AG04450 (cell line): ENCODE measurements at regions of chr11 and their contacts with region 1.

Region 1: DNA sequence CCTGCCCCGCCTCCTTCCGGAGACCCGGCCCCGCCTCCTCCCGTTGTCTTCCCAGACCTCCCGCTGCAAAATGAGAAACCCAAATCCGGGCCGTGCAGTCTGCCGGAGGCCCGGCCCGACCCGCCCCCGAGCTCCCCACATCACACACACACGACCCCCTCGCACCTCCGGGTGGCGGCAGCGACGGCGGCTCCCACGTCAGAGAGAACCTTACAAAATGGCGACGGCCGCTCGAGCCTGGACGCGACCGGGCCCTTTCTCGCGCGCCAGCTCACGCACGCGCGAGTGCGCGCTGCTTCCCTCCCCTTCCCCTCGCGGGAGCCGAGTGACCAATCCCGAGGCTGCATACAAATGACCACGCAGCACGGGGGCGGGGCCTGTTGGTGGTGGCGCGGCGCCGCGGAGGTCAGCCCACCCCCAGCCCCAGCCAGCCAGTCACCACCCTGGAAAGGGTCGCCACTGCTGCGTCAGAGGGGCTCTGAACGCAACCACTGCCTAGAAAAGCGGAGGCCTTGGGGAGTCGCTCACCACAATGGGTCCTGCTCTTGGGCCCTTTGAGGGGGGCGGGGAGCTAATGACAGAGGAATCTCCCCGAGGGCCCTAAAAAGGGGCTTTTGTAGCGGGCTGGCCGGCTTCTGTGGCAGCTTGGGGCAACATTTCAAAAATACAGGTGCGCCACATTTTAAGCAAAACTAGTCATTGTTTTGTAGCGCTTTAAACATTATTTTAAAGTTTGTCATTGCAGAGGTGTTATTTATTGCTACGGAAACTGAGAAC is at the start of gene RBM4B:
- DNase-seq: peak; percentile 88
- H3K4me3 ChIP-seq: peak within 1 kb of the TSS; percentile 76
- H3K27ac ChIP-seq: peak within 1 kb of the TSS; percentile 96
- H3K27me3 ChIP-seq: no peaks in the 10 kb centered on the region
- CTCF ChIP-seq: no peak
- polyA plus RNA-seq, gene RBM4B: 37.4 and 43.8 TPM in 2 replicates

Region 2: GRCh38 chr11:66545701-66546367 is 132.0 kb before region 1 on chr11 and contains the start of gene ZDHHC24:
- CTCF ChIA-PET with region 1: interaction called, 10 read pairs
- POLR2A ChIA-PET with region 1: interaction called, 17 read pairs
- DNase-seq: peak; percentile 94
- H3K4me3 ChIP-seq: peak within 1 kb of the TSS; percentile 70
- H3K27ac ChIP-seq: no peak within 1 kb of the TSS
- H3K27me3 ChIP-seq: peaks cover 10% of the 10 kb centered on the region
- CTCF ChIP-seq: no peak
- polyA plus RNA-seq, gene ZDHHC24: 6.2 and 6.8 TPM in 2 replicates

Region 3: GRCh38 chr11:66579017-66579606 is 98.7 kb before region 1 on chr11:
- CTCF ChIA-PET with region 1: interaction called, 29 read pairs
- POLR2A ChIA-PET with region 1: interaction called, 3 read pairs
- DNase-seq: peak; percentile 48
- H3K4me3 ChIP-seq: no peak overlapping the region; the same call in 1 of the 2 replicates
- H3K27ac ChIP-seq: no peak overlapping the region
- H3K27me3 ChIP-seq: no peaks in the 10 kb centered on the region
- CTCF ChIP-seq: peak; percentile 84

Region 4: GRCh38 chr11:66638177-66639065 is 39.4 kb before region 1 on chr11 and contains the start of gene RBM4:
- CTCF ChIA-PET with region 1: interaction called, 3 read pairs
- POLR2A ChIA-PET with region 1: interaction called, 20 read pairs
- DNase-seq: peak; percentile 100
- H3K4me3 ChIP-seq: peak within 1 kb of the TSS; percentile 98
- H3K27ac ChIP-seq: peak within 1 kb of the TSS; percentile 88
- H3K27me3 ChIP-seq: no peaks in the 10 kb centered on the region
- CTCF ChIP-seq: 0 out of 2 replicates have a peak, but pooled peaks have one; percentile 21
- polyA plus RNA-seq, gene RBM4: 234 and 272 TPM in 2 replicates

Region 5: DNA sequence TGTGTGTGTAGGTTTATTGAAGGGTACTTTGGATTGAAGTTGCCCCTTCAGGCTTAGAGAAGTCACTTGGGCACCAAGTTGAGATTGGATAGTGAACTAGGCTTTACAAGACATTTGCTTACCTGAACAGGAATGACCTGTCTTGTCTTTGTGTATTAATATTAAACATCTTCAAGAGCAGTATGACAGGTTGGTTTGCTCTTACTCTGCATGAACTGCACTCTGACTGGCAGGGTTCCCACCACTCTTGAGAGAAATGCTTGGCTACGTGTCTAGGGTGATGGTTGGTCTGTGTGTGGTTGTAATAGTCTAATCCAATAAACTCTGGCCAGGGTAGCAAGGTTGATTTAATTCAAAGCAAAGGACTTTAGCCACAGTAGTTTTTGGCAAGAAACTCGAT is 71.3 kb after region 1 on chr11:
- CTCF ChIA-PET with region 1: interaction called, 10 read pairs
- POLR2A ChIA-PET with region 1: no interaction called
- DNase-seq: no peak
- H3K4me3 ChIP-seq: no peak overlapping the region
- H3K27ac ChIP-seq: no peak overlapping the region
- H3K27me3 ChIP-seq: no peaks in the 10 kb centered on the region
- CTCF ChIP-seq: no peak